ENCODE measurements at regions of chr16 and their contacts with region 1.

Region 1: DNA sequence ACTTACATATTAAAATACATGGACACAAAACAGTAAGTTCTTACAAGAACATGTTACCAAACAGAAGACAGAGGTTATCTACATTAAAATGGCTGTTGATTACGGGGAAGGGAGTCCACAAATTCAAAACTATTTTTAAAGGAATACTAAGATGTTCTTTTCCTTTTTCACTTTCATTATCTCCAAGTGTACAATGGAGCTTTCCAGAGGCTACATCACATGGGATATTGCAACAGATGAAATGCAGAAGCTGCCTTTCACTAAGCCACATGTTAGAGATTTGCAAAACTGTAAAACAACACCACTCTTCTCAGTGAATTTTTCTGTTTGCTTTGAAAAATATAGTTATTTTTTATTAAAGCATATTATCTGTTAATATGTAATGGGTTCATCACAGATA is 53.6 kb downstream of the XPO6 start:
- DNase-seq: peak in 1 of 2 donors; percentile 32
- H3K4me3 ChIP-seq: no peak overlapping the region
- CTCF ChIP-seq: no peak
- POLR2A ChIP-seq: no peak

Region 2: GRCh38 chr16:28202147-28202746 is 44.1 kb after region 1 on chr16:
- intact Hi-C with region 1: loop called (anchors 10 kb)
- DNase-seq: no peak
- H3K4me3 ChIP-seq: no peak overlapping the region
- CTCF ChIP-seq: no peak
- POLR2A ChIP-seq: no peak